ENCODE measurements at regions of chr3 and their contacts with region 1.

Region 1: DNA sequence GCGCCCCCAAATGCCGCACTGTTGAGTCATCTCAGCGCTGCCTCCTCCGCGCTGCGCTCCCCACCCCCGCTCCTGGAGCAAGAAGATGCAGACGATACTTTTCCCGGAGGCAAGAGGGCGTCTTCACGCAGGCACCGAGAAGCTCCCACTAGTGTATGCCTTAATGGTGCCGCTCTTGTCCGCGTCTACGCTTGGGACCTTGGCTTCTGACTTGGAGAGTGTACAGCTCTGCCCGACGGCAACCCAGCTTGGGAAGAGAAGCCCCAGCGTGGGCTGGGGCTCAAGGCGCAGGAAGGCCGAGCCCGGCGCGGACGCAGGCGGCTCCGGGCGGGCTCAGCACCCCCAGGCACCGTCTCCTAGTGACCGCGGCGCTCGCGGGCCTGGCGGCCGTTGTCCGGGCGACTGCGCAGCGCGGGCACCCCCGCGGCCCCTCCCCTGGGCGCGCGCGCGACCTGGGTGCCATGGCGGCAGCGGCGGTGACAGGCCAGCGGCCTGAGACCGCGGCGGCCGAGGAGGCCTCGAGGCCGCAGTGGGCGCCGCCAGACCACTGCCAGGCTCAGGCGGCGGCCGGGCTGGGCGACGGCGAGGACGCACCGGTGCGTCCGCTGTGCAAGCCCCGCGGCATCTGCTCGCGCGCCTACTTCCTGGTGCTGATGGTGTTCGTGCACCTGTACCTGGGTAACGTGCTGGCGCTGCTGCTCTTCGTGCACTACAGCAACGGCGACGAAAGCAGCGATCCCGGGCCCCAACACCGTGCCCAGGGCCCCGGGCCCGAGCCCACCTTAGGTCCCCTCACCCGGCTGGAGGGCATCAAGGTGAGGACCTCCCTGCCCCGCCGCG is at the start of gene P4HTM:
- DNase-seq: peak; percentile 84
- H3K4me3 Mint-ChIP-seq: peak within 1 kb of the TSS; percentile 96
- H3K27ac Mint-ChIP-seq: peak within 1 kb of the TSS; percentile 93
- H3K4me1 Mint-ChIP-seq: peaks cover 9% of the 10 kb centered on the region
- H3K27me3 Mint-ChIP-seq: no peaks in the 10 kb centered on the region
- CTCF ChIP-seq: no peak
- total RNA-seq, gene P4HTM: 63.0 and 72.0 TPM in 2 replicates

Region 2: DNA sequence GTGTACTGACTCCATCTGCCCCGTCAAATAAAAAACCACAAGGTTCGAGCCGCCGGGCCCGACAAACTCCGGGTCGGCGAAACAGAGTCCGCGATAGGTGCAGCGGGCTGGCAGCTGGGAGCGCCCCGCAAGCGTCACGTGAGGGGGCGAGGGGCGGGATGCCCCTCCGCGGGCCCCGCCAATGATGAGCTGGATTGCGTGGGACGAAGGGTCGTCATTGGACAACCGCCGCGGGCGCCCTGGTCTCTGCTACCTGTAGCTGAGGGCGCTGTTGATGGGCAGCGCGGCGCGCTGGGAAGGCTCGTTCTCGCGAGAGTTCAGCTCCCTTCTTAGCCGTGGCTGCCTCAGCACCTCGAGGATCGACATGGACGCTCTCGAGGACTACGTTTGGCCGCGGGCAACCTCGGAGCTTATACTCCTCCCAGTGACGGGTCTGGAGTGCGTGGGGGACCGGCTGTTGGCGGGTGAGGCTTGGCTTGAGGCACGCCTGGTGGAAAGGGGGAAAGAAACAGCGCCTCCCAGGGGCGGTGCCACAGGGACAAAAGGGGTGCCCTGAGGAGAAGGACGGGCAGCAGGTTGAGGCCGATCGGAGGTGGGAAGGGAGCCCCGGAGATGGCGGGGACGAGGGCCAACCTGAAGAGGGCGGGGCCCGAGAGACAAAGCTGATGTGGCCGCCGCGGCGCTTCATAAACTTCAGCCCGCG is 17.2 kb after region 1 on chr3 and contains the start of gene WDR6:
- CTCF ChIA-PET with region 1: interaction called, 20 read pairs
- intact Hi-C with region 1: no loop called
- DNase-seq: peak; percentile 97
- H3K4me3 Mint-ChIP-seq: peak within 1 kb of the TSS; percentile 84
- H3K27ac Mint-ChIP-seq: peak within 1 kb of the TSS; percentile 88
- H3K4me1 Mint-ChIP-seq: peaks cover 16% of the 10 kb centered on the region
- H3K27me3 Mint-ChIP-seq: no peaks in the 10 kb centered on the region
- CTCF ChIP-seq: no peak
- total RNA-seq, gene WDR6: 113 and 138 TPM in 2 replicates

Region 3: DNA sequence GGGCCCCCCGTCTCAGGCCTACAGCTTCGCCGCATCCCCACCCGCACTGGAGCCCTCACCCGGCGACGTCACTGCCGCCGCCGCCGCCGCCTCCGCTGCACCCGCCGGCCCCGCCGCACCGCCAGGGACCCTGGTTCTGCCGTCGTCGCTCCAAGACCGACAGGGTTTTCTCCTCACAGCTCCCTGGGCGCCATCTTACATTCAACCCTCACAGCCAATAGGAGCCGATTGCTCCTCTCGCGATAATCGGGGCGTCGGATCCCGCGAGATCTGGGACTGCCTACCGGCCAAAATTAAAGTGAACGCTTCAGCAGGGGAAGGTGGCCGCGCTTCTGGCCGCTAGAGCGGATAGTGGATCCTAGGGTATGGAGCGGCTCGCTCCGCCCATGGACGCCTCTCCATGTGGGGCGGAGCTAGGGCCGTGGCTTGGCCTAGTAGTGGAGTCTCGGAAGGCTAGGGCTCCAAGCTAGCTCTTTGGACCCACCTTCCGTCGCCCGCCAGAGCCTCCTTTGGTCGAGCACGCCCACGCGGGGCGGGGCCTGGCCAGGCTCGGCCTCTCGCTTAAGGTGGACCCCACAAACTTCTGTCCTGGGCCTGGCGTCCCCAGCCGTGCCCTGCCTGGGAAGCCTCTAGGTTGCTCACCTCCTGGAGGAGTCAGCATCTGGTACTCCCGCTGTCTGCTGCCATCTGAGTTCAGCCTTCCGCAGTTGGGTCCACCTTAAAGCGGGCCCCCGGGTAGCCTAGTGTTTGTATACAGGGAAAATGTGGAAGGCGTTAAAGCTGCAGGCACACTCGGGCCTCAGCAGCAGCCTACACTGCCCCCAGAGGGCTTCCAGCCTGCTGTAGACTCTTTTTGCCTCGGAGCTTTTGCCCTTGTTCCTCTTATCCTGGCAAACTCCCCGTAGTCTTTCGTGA is 104.1 kb after region 1 on chr3 and contains the start of gene QRICH1:
- CTCF ChIA-PET with region 1: interaction called, 12 read pairs
- intact Hi-C with region 1: no loop called
- DNase-seq: peak; percentile 96
- H3K4me3 Mint-ChIP-seq: peak within 1 kb of the TSS; percentile 95
- H3K27ac Mint-ChIP-seq: peak within 1 kb of the TSS; percentile 99
- H3K4me1 Mint-ChIP-seq: no peaks in the 10 kb centered on the region
- H3K27me3 Mint-ChIP-seq: no peaks in the 10 kb centered on the region
- CTCF ChIP-seq: no peak
- total RNA-seq, gene QRICH1: 97.8 and 107 TPM in 2 replicates